ENCODE measurements at regions of chr2 and their contacts with region 1.

Region 1: GRCh38 chr2:70104231-70105111 is 17.2 kb downstream of the PCBP1 start:
- DNase-seq: peak; percentile 54
- H3K4me3 Mint-ChIP-seq: peak overlapping the region; percentile 72
- H3K27ac Mint-ChIP-seq: peak overlapping the region; percentile 90
- H3K4me1 Mint-ChIP-seq: peaks cover 56% of the 10 kb centered on the region
- H3K27me3 Mint-ChIP-seq: no peaks in the 10 kb centered on the region

Region 2: DNA sequence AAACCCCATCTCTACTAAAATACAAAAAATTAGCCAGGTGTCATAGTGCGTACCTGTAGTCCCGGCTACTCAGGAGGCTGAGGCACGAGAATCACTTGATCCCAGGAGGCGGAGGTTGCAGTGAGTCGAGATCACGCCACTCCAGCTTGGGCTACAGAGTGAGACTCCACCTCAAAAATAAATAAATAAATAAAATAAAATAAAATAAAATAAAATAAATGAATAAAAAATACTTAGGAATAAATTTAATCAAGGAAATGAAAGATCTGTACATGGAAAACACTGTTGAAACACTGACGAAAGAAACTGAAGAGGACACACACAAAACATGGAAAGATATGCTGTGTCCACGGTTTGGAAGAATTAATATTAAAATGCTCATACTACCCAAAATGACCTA is 86.5 kb before region 1 on chr2:
- CTCF ChIA-PET with region 1: no interaction called
- POLR2A ChIA-PET with region 1: no interaction called
- DNase-seq: no peak
- H3K4me3 Mint-ChIP-seq: no peak overlapping the region
- H3K27ac Mint-ChIP-seq: no peak overlapping the region
- H3K4me1 Mint-ChIP-seq: peaks cover 28% of the 10 kb centered on the region
- H3K27me3 Mint-ChIP-seq: no peaks in the 10 kb centered on the region

Region 3: DNA sequence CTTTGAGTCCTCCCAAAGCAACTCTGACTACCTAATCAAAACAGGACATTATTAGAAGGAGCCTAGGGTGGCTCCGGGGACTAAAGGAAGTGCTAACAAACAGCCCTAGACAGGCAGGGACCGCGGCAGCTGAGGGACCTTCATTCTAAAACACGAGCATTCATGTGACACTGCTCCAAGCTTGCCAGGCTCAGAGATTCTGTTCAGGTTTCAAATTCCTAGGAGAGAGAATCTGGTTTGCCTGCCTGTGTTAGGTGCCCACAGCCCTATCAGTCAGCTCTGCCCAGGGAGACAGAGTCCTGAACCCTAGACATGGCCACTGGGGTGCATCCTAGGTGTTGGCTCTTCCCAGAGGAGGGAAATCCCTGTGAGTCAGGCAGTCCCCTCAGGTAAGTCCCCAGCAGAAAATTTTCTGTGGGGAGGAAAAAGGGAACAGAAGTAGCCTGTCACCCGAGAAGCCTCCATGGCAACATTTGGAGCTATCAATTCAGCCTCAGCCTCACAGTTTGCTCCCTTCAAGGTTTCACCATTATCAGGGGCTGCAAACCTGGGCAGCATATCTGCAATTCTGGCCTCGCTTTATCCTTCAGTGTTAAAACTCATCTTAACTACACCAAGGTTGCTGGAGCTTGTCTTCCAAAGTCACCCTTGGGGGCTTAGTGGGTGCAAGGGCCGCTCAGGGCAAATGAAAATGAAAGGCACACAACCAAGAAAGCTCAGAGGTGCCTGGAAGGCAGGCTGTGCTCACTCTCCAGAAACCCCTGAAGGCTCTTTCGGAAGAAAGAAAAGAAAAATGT is 11.4 kb after region 1 on chr2:
- CTCF ChIA-PET with region 1: no interaction called
- POLR2A ChIA-PET with region 1: interaction called, 496 read pairs
- DNase-seq: no peak
- H3K4me3 Mint-ChIP-seq: no peak overlapping the region
- H3K27ac Mint-ChIP-seq: no peak overlapping the region
- H3K4me1 Mint-ChIP-seq: peaks cover 21% of the 10 kb centered on the region
- H3K27me3 Mint-ChIP-seq: no peaks in the 10 kb centered on the region